ENCODE measurements at regions of chr12 and their contacts with region 1.

Region 1: DNA sequence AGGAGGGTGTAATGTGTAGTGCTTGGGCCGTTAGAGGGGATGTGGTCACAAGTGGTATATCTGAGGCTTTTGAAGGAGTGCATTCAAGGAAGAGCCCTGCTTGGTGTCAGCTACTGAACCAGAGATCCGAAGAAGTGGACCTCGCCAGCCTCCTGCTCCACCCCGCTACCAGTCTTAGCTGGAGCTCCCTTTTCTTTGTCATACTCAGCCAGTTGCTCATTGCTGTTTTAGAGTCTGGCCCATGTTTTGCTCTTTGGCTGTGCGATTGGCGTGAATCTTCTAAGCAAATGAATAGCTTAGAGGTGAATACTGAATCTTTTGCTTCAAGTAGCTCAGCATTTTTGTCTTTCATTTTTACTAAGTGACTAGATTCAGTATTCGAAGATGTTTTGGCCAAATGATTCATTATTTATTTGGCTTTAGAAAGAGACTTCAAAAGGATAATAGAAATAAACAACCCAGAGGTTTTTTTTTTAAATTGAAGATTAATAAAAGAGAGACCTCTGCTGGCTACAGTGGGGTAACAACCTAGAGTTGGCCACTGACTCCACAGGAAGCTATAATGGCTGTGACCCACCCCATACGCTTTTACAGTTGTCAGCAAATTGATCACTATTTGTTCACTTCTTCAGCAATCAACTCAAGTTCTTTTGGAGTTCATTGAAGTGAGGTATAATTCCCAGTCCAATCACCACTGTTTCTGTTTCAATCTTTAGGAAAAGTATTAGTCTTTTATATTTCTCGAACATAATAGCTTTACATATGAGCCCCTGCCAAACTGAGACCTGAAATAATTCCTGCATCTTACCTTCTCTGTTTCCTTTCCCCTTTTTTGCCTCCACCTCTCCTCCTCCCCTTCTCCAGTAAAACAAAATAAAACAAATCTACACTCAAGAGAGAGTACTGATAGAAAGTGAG is 19.9 kb downstream of the CDKN1B start:
- DNase-seq: peak in 2 of 5 donors; percentile 23 to 26
- ATAC-seq: peak; percentile 45 to 83 (median 76)
- H3K4me3 ChIP-seq: peak overlapping the region in 3 of 12 donors; percentile 1 to 15 (median 3)
- H3K27ac ChIP-seq: peak overlapping the region in 8 of 12 donors; percentile 0 to 79 (median 22)
- H3K4me1 ChIP-seq: peaks cover 0 to 44% (median 16%) of the 10 kb centered on the region in 12 donors
- H3K27me3 ChIP-seq: no peaks in the 10 kb centered on the region
- CTCF ChIP-seq: peak; percentile 55 to 82 (median 68)
- POLR2A ChIP-seq: no peak

Region 2: DNA sequence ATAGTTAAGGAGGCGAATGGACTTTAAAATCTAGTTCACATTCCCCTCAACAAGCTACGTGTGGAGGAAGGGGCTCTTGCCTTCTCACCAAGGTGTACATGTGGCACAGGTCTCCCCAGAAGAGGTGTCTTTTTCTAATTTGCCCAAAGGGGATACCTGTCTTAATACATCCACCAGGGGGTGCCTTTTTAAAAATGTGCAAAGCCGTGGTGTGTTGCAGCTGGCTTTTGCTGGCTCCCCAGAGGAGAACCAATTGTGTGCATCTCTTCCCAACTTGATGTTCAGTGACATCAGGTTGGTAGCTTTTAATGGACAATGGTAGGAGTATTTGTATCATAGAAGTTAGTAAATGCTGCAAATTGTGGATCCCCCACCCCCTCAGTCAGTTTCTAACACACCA is 91.5 kb before region 1 on chr12:
- intact Hi-C with region 1: loop called in 1 of 10 experiments (anchors 5 kb)
- DNase-seq: no peak
- ATAC-seq: no peak
- H3K4me3 ChIP-seq: no peak overlapping the region
- H3K27ac ChIP-seq: no peak overlapping the region
- H3K4me1 ChIP-seq: no peaks in the 10 kb centered on the region
- H3K27me3 ChIP-seq: no peaks in the 10 kb centered on the region
- CTCF ChIP-seq: peak; percentile 23 to 51 (median 36)
- POLR2A ChIP-seq: no peak

Region 3: GRCh38 chr12:12779529-12779928 is 42.5 kb after region 1 on chr12:
- intact Hi-C with region 1: loop called in 3 of 10 experiments (anchors 5 kb)
- DNase-seq: no peak
- ATAC-seq: peak in 3 of 4 donors; percentile 46 to 80 (median 59)
- H3K4me3 ChIP-seq: no peak overlapping the region
- H3K27ac ChIP-seq: peak overlapping the region in 4 of 12 donors; percentile 1 to 22 (median 16)
- H3K4me1 ChIP-seq: peaks cover 0 to 24% (median 4%) of the 10 kb centered on the region in 12 donors
- H3K27me3 ChIP-seq: no peaks in the 10 kb centered on the region
- CTCF ChIP-seq: no peak
- POLR2A ChIP-seq: no peak

Region 4: DNA sequence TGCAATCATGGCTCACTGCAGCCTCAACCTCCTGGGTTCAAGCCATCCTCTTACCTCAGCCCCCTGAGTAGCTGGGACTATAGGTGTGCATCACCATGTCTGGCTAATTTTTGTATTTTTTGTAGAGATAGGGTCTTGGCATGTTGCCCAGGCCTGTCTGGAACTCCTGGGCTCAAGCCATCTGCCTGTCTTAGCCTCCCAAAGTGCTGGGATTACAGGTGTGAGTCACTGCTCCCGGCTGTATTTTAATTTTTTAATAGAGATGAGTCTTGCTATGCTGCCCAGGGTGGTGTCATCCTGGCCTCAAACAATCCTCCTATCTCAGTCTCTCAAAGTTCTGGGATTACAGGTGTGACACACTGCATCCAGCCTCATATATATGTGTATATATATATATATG is 122.7 kb after region 1 on chr12:
- intact Hi-C with region 1: no loop called
- DNase-seq: no peak
- ATAC-seq: no peak
- H3K4me3 ChIP-seq: no peak overlapping the region
- H3K27ac ChIP-seq: no peak overlapping the region
- H3K4me1 ChIP-seq: no peaks in the 10 kb centered on the region
- H3K27me3 ChIP-seq: no peaks in the 10 kb centered on the region
- CTCF ChIP-seq: no peak
- POLR2A ChIP-seq: no peak

Region 5: DNA sequence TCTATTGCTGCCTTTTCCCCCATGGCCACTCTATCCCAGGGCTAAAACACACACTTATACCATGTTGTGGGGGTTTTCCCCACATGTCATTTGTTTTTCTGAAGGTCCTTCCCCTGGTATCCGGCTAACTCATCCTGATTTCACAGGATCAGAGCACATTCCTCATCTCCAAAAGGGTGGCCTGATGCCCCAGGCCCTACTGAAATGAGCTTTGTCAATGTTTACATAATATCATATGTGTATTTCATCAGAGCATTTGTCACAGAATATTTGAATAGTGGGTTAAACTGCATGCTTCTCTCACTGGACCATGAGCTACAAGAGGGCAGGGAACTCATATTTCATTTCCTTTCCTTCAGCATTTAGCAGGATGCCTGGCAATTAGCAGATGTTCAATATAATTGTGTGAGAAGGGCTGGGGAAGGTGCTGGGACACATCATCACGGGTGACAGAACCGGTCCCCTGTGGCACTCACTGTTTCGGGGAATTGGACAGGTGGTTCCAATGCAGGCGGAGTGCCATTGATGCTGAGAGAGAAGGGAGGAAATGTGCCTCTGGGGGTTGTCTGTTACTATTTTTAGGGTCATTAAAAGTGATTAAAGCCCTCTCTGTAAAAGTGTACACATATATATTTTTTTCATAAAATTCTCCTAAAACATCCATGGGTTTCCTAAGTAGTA is 486.3 kb after region 1 on chr12:
- intact Hi-C with region 1: no loop called
- DNase-seq: no peak
- ATAC-seq: no peak
- H3K4me3 ChIP-seq: no peak overlapping the region
- H3K27ac ChIP-seq: no peak overlapping the region
- H3K4me1 ChIP-seq: peaks cover 0 to 5% (median 0%) of the 10 kb centered on the region in 12 donors
- H3K27me3 ChIP-seq: no peaks in the 10 kb centered on the region
- CTCF ChIP-seq: no peak
- POLR2A ChIP-seq: no peak